Brain microvascular endothelial cell (primary cell): ENCODE measurements at regions of chr11 and their contacts with region 1.

Region 1: DNA sequence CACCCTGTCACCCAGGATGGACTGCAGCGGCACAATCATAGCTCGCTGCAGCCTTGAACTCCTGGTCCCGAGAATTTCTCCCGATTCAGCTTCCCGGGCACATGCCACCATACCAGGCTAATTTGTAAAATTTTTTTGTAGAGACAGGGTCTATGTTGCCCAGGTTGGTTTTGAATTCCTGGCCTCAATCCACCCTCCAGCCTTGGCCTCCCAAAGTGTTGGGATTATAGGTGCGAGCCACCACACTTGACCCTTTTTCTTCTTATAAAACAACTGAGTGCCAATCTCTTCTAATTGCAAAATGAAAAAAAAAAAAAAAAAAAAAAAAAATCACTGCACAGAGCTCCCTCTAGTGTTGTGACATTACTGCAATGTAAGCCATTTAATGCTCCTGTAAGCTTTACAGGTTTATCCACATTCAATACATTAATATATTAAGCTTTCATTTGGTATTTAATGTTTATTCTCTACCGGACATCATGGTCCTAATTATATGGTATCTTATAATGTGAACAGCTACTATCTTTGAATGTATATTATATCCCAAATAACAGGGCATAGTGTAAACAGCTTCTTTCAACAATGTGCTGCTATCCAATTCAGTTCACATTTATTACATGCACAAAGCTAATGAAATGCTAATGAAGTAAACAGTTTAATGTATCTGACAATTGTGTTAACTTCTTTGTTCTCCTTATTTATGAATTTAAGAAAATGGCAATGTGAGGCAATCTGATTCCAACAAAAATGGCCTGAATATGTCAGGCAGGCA is 44.6 kb downstream of the COPB1 start:
- DNase-seq: no peak
- H3K4me3 ChIP-seq: no peak overlapping the region
- H3K27ac ChIP-seq: no peak overlapping the region
- H3K27me3 ChIP-seq: no peaks in the 10 kb centered on the region
- CTCF ChIP-seq: peak; percentile 59

Region 2: DNA sequence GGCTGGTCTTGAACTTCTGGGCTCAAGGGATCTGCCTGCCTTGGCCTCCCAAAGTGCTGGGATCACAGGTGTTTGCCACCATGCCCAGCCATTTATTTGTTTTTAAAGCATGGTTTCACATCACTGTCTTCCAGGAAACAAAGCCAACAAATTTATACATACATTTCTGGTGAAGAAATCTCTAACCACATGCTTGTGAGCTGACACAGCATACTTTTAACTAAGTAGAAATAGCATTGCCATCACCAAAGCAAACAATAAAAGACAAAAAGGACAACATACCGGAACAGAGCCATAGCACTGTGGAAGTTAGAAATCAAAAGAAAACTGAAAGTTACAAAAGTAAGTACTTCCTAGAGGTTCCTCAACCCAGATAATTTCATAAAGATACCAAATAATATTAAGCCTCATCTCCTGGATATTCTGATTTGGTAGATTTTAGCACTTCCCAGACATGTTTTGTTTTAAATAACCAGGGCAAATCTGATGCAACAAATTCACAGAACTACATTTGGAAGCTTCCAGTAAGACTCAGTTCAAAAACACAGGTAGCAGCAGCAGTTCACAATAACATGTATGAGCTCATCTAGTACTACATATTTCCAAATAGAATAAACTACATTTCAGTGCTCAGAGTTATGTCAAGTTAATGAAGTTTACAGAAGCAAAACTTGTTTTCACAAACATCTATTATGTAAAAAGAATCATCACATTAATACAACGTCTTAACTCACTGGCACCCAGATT is 166.7 kb before region 1 on chr11:
- in situ Hi-C with region 1: loop called (anchors 25 kb)
- DNase-seq: peak; percentile 68
- H3K4me3 ChIP-seq: no peak overlapping the region
- H3K27ac ChIP-seq: peak overlapping the region; percentile 76
- H3K27me3 ChIP-seq: no peaks in the 10 kb centered on the region
- CTCF ChIP-seq: no peak

Region 3: DNA sequence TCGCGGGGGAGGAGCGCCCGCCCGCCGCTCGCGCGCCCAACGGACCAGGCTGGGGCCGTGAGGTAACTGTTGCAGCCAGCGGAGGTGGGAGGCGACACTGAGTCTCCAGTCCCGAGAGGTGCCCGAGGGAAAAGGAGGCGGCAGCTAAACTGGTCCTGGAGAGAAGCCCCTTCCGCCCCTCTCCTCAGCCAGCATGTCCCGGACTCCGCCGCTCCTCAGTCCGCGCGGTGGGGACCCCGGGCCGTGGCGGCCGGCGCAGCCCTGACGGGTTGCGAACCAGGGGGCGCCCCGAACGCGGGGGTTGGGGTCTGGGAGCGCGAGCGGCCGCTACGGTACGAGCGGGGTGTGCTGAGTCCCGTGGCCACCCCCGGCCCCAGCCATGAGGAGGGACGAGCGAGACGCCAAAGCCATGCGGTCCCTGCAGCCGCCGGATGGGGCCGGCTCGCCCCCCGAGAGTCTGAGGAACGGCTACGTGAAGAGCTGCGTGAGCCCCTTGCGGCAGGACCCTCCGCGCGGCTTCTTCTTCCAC is 188.7 kb after region 1 on chr11 and contains the start of gene PDE3B:
- in situ Hi-C with region 1: no loop called
- DNase-seq: peak; percentile 6
- H3K4me3 ChIP-seq: peak within 1 kb of the TSS; percentile 71
- H3K27ac ChIP-seq: no peak within 1 kb of the TSS
- H3K27me3 ChIP-seq: peaks cover 5% of the 10 kb centered on the region
- CTCF ChIP-seq: no peak